ENCODE measurements at regions of chr6 and their contacts with region 1.

Region 1: DNA sequence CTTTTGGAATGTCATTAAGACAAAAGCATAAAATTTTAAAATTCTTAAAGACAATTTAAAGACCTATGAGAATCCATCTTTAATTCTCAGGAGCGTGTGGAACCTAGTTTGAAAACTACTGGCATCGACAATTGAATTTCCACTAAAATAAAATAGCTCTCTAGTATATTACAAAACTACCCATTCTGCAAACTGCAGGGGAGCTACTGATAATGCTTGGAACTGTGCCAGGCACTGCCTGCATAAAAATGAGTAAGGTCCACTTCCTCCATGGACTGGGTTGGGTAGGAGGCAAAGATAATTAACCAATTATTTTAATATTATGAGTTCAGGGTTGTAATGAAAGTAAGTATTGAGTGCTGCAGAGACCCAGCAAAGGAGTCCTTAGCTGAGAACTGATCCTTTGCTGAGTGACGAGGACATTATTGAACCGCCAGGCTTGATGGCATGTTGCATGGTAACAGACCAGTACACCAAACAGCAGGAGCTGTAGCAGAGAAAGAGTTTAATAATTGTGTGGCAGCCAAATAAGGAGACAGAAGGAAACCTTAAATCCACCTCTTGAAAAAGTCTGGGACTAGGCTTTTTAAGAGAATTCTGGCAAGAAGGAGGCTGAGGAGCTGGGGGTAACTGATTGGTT is 261.3 kb downstream of the ESR1 start:
- DNase-seq: no peak
- H3K4me3 Mint-ChIP-seq: no peak overlapping the region
- H3K27ac Mint-ChIP-seq: no peak overlapping the region
- H3K4me1 Mint-ChIP-seq: no peaks in the 10 kb centered on the region
- H3K27me3 Mint-ChIP-seq: peaks cover 6% of the 10 kb centered on the region

Region 2: DNA sequence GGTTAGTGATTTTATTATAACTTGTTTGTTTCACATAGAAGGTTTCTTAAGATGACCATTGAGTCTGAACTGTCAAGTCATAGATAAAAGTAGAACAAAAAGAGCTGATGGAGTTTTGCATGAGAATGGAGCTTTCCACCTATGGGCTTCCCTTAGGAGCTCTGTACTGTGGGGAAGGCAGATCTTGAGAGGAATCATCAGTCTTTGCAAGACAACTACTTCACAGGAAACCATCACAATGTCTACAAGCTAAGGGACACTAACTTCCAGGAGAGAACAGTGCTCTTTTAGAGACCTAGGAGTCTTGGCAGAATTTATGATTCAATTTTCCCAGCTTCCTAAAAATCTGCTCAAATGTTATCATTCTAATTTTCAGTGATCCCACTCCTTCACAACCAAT is 835.9 kb after region 1 on chr6:
- intact Hi-C with region 1: loop called (anchors 5 kb)
- DNase-seq: no peak
- H3K4me3 Mint-ChIP-seq: no peak overlapping the region
- H3K27ac Mint-ChIP-seq: no peak overlapping the region
- H3K4me1 Mint-ChIP-seq: no peaks in the 10 kb centered on the region
- H3K27me3 Mint-ChIP-seq: peaks cover 8% of the 10 kb centered on the region

Measured in activated T-helper 1 cell treated with anti-CD3 and anti-CD28 coated beads, Interleukin-12 subunit alpha, Interleukin-12 subunit beta, Interleukin-2, Interleukin-4 antibody, amounts not matched to agents 30 ng/mL and 10 ng/mL and 1 ng/mL, durations not matched to agents 14 hours and 24 hours and 36 hours (primary cell).